ENCODE measurements at regions of chr12 and their contacts with region 1.

Region 1: GRCh38 chr12:95185072-95185471 is 32.2 kb downstream of the FGD6 start:
- DNase-seq: no peak
- ATAC-seq: no peak
- H3K4me3 ChIP-seq: no peak overlapping the region
- H3K27ac ChIP-seq: peak overlapping the region in 1 of 2 experiments; percentile 90; a peak in 3 of 6 replicates
- H3K4me1 ChIP-seq: peaks cover 77% of the 10 kb centered on the region
- CTCF ChIP-seq: no peak
- EP300 ChIP-seq: no peak
- POLR2A ChIP-seq: no peak
- RAD21 ChIP-seq: no peak

Region 2: GRCh38 chr12:95147866-95148265 is 37.2 kb before region 1 on chr12:
- CTCF ChIA-PET with region 1: no interaction called
- POLR2A ChIA-PET with region 1: interaction called, 20 read pairs
- DNase-seq: no peak
- ATAC-seq: no peak
- H3K4me3 ChIP-seq: no peak overlapping the region
- H3K27ac ChIP-seq: no peak overlapping the region
- H3K4me1 ChIP-seq: 0 out of 3 replicates have a peak, but pooled peaks cover 3% of the 10 kb centered on the region
- CTCF ChIP-seq: no peak
- EP300 ChIP-seq: no peak
- POLR2A ChIP-seq: no peak
- RAD21 ChIP-seq: no peak

Region 3: GRCh38 chr12:95158919-95159318 is 26.2 kb before region 1 on chr12:
- CTCF ChIA-PET with region 1: no interaction called
- POLR2A ChIA-PET with region 1: no interaction called
- DNase-seq: no peak
- ATAC-seq: no peak
- H3K4me3 ChIP-seq: no peak overlapping the region
- H3K27ac ChIP-seq: peak overlapping the region in 1 of 2 experiments; percentile 49; a peak in 2 of 6 replicates
- H3K4me1 ChIP-seq: peaks cover 18% of the 10 kb centered on the region
- CTCF ChIP-seq: no peak
- EP300 ChIP-seq: no peak
- POLR2A ChIP-seq: no peak
- RAD21 ChIP-seq: no peak

Region 4: DNA sequence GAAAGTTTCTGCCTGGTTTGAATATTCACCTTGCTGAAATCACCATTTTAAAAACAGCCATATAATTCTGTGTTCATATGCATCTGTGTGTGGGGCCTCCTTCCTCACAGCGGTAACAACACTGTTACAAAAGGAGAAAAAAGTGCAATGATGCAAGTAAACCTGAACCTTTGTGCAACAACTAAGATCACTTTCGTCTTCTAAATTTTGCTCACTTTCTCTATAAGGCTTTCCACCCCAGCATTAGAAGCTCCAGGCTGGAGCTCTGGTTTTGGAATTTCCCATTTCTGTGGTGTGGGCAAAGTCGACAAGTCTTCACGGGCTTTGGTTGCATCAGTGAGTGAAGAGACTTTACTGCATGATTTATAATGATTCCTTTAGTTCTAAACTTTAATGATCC is 13.8 kb after region 1 on chr12:
- CTCF ChIA-PET with region 1: interaction called, 10 read pairs
- POLR2A ChIA-PET with region 1: interaction called, 33 read pairs
- DNase-seq: peak in 1 of 2 experiments; percentile 31
- ATAC-seq: no peak
- H3K4me3 ChIP-seq: 0 out of 3 replicates have a peak overlapping the region, but pooled peaks have one; percentile 10
- H3K27ac ChIP-seq: peak overlapping the region; percentile 95 to 99
- H3K4me1 ChIP-seq: peaks cover 62% of the 10 kb centered on the region
- CTCF ChIP-seq: no peak
- EP300 ChIP-seq: no peak
- POLR2A ChIP-seq: no peak
- RAD21 ChIP-seq: no peak